ENCODE measurements at regions of chr4 and their contacts with region 1.

Region 1: GRCh38 chr4:1365271-1366178 is 18.5 kb downstream of the UVSSA start:
- DNase-seq: no peak
- ATAC-seq: no peak

Region 2: DNA sequence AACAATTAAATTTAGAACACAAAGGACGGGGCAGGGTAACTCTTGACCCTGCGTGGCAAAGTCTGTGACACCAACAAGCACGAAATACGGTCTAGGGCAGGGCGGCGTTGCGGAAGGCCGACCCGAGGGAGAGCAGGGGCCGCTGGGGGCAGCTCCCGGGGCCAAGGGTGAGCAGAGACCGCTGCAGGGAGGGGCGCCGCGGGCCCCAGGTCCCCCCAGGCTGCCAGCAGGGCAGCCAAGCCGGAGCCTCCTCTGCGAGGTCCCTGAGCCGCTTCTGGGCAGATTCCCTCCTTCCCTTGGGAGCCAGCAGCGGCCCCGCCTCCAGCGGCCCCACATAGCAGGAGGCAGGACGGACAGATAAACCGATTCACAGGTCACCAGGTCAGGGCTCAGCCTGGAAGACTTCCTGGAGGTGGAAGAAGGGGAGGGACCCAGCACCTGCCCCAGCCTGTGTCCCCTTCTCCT is 228.4 kb after region 1 on chr4:
- intact Hi-C with region 1: loop called (anchors 1 kb)
- DNase-seq: no peak
- ATAC-seq: no peak